H1 (cell line): ENCODE measurements at regions of chr2 and their contacts with region 1.

Region 1: DNA sequence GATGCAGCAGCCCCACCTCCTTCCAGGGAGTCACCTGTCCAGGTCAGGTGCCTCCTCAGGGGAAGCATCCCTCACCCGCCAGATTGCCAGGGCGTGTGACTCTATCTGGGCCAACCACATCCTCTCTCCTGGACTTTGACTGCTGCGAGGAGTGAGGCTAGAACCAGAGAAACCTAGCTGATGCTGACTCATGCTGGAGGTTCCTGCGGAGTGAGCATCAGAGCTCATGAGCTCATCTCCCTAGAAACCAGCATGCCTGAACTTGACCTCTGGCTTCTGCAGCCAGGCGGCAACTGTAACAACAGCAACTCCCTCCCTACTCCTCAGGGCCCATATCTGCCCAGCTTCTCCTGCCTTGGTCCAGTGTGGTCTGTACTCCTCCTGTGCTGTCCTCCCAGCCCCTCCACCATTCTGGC is 28.3 kb upstream of the NT5DC4 start:
- DNase-seq: peak; percentile 13 to 41
- H3K4me3 ChIP-seq: no peak overlapping the region
- H3K27ac ChIP-seq: no peak overlapping the region
- H3K4me1 ChIP-seq: peaks cover 0 to 6% (median 3%) of the 10 kb centered on the region in 4 experiments; a peak in 4 of 7 replicates
- H3K27me3 ChIP-seq: no peaks in the 10 kb centered on the region
- CTCF ChIP-seq: no peak
- EP300 ChIP-seq: no peak
- POLR2A ChIP-seq: no peak
- RAD21 ChIP-seq: no peak

Region 2: DNA sequence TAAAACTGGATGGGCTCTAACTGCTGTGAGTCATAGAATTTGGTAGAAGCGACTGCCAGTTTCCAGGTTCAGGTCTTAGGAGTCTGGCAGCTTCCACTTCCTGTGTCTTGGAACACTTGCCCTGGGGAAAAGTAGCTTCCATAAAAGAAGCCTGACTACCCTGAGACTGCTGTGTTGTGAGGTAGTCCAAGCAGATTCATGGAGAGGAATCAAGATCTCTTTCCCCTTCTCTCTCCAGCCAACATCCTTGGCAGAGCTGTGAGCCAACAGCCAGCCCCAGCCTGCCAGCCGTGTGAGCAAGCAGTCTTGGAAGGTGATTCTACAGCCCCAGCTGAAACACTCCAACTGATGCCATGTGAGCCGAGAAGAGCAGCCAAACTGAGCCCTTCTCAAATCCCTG is 13.0 kb before region 1 on chr2:
- CTCF ChIA-PET with region 1: interaction called, 14 read pairs
- POLR2A ChIA-PET with region 1: interaction called, 3 read pairs
- DNase-seq: no peak
- H3K4me3 ChIP-seq: no peak overlapping the region
- H3K27ac ChIP-seq: no peak overlapping the region
- H3K4me1 ChIP-seq: no peaks in the 10 kb centered on the region
- H3K27me3 ChIP-seq: no peaks in the 10 kb centered on the region
- CTCF ChIP-seq: no peak
- EP300 ChIP-seq: no peak
- POLR2A ChIP-seq: no peak
- RAD21 ChIP-seq: no peak